CD4-positive, alpha-beta T cell (primary cell): ENCODE measurements at regions of chr4 and their contacts with region 1.

Region 1: GRCh38 chr4:16026160-16026761 is 57.6 kb downstream of the PROM1 start:
- DNase-seq: peak in 5 of 14 experiments; percentile 3 to 78 (median 65)
- ATAC-seq: no peak
- H3K4me3 ChIP-seq: no peak overlapping the region
- H3K4me3 Mint-ChIP-seq: no peak overlapping the region
- H3K27ac ChIP-seq: no peak overlapping the region
- H3K27ac Mint-ChIP-seq: no peak overlapping the region
- H3K4me1 ChIP-seq: no peaks in the 10 kb centered on the region
- H3K4me1 Mint-ChIP-seq: no peaks in the 10 kb centered on the region
- H3K27me3 ChIP-seq: peaks cover 0 to 2% of the 10 kb centered on the region in 2 experiments
- H3K27me3 Mint-ChIP-seq: peaks cover 14% of the 10 kb centered on the region
- CTCF ChIP-seq: peak; percentile 96

Region 2: GRCh38 chr4:16001484-16001858 is 24.8 kb before region 1 on chr4:
- CTCF ChIA-PET with region 1: no interaction called
- POLR2A ChIA-PET with region 1: no interaction called
- intact Hi-C with region 1: no loop called
- DNase-seq: peak in 13 of 14 experiments; percentile 10 to 76 (median 29)
- ATAC-seq: peak; percentile 86
- H3K4me3 ChIP-seq: no peak overlapping the region
- H3K4me3 Mint-ChIP-seq: no peak overlapping the region
- H3K27ac ChIP-seq: no peak overlapping the region
- H3K27ac Mint-ChIP-seq: no peak overlapping the region
- H3K4me1 ChIP-seq: peaks cover 4% of the 10 kb centered on the region
- H3K4me1 Mint-ChIP-seq: no peaks in the 10 kb centered on the region
- H3K27me3 ChIP-seq: peaks cover 4 to 7% of the 10 kb centered on the region in 2 experiments
- H3K27me3 Mint-ChIP-seq: no peaks in the 10 kb centered on the region
- CTCF ChIP-seq: peak; percentile 69

Region 3: GRCh38 chr4:16196478-16197393 is 170.5 kb after region 1 on chr4:
- CTCF ChIA-PET with region 1: no interaction called
- POLR2A ChIA-PET with region 1: no interaction called
- intact Hi-C with region 1: loop called (anchors 2 to 10 kb)
- DNase-seq: peak in 3 of 14 experiments; percentile 14 to 46 (median 39)
- ATAC-seq: peak; percentile 68
- H3K4me3 ChIP-seq: no peak overlapping the region
- H3K4me3 Mint-ChIP-seq: peak overlapping the region; percentile 3
- H3K27ac ChIP-seq: no peak overlapping the region
- H3K27ac Mint-ChIP-seq: peak overlapping the region; percentile 16
- H3K4me1 ChIP-seq: peaks cover 3% of the 10 kb centered on the region
- H3K4me1 Mint-ChIP-seq: peaks cover 47% of the 10 kb centered on the region
- H3K27me3 ChIP-seq: no peaks in the 10 kb centered on the region
- H3K27me3 Mint-ChIP-seq: no peaks in the 10 kb centered on the region
- CTCF ChIP-seq: no peak

Region 4: GRCh38 chr4:16264798-16265197 is 238.5 kb after region 1 on chr4:
- CTCF ChIA-PET with region 1: interaction called, 9 read pairs
- POLR2A ChIA-PET with region 1: no interaction called
- intact Hi-C with region 1: loop called (anchors 1 kb)
- DNase-seq: peak in 3 of 14 experiments; percentile 57 to 65 (median 64)
- ATAC-seq: no peak
- H3K4me3 ChIP-seq: no peak overlapping the region
- H3K4me3 Mint-ChIP-seq: no peak overlapping the region
- H3K27ac ChIP-seq: no peak overlapping the region
- H3K27ac Mint-ChIP-seq: no peak overlapping the region
- H3K4me1 ChIP-seq: no peaks in the 10 kb centered on the region
- H3K4me1 Mint-ChIP-seq: peaks cover 12% of the 10 kb centered on the region
- H3K27me3 ChIP-seq: no peaks in the 10 kb centered on the region
- H3K27me3 Mint-ChIP-seq: no peaks in the 10 kb centered on the region
- CTCF ChIP-seq: peak; percentile 69

Region 5: GRCh38 chr4:16916719-16917337 is 890.6 kb after region 1 on chr4:
- CTCF ChIA-PET with region 1: no interaction called
- POLR2A ChIA-PET with region 1: no interaction called
- intact Hi-C with region 1: loop called in 1 of 2 experiments (anchors 5 kb)
- DNase-seq: peak; percentile 39 to 78 (median 48)
- ATAC-seq: peak; percentile 90
- H3K4me3 ChIP-seq: no peak overlapping the region
- H3K4me3 Mint-ChIP-seq: no peak overlapping the region
- H3K27ac ChIP-seq: no peak overlapping the region
- H3K27ac Mint-ChIP-seq: no peak overlapping the region
- H3K4me1 ChIP-seq: no peaks in the 10 kb centered on the region
- H3K4me1 Mint-ChIP-seq: no peaks in the 10 kb centered on the region
- H3K27me3 ChIP-seq: no peaks in the 10 kb centered on the region
- H3K27me3 Mint-ChIP-seq: no peaks in the 10 kb centered on the region
- CTCF ChIP-seq: peak; percentile 75

Region 6: GRCh38 chr4:17447675-17448298 is 1421.5 kb after region 1 on chr4:
- CTCF ChIA-PET with region 1: interaction called, 4 read pairs
- POLR2A ChIA-PET with region 1: no interaction called
- intact Hi-C with region 1: loop called (anchors 5 kb)
- DNase-seq: peak in 13 of 14 experiments; percentile 2 to 78 (median 36)
- ATAC-seq: peak; percentile 57
- H3K4me3 ChIP-seq: no peak overlapping the region
- H3K4me3 Mint-ChIP-seq: no peak overlapping the region
- H3K27ac ChIP-seq: no peak overlapping the region
- H3K27ac Mint-ChIP-seq: no peak overlapping the region
- H3K4me1 ChIP-seq: no peaks in the 10 kb centered on the region
- H3K4me1 Mint-ChIP-seq: no peaks in the 10 kb centered on the region
- H3K27me3 ChIP-seq: no peaks in the 10 kb centered on the region
- H3K27me3 Mint-ChIP-seq: no peaks in the 10 kb centered on the region
- CTCF ChIP-seq: peak; percentile 73